RWPE1 (cell line): ENCODE measurements at regions of chr10 and their contacts with region 1.

Region 1: GRCh38 chr10:58531084-58531695 is 18.5 kb downstream of the BICC1 start:
- DNase-seq: peak; percentile 29
- H3K27ac ChIP-seq: no peak overlapping the region
- CTCF ChIP-seq: peak; percentile 84

Region 2: DNA sequence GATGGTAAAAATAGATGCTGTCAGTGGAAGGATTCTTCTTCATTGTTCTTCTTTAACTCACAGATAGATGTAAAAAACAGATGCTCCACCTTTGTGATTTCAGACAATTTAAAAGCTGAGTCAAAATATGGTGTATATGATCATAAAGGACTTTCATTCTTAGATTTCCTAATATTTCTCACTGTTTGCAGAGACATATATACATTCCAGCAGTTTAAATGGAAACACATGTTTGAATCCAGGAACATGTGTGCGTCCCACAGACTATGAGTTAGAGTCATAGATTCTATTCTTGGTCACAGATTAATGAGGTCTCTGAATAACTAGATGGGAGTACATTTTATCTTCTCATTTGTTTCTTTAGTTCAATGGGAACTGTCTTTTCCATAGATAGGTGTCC is 91.1 kb after region 1 on chr10:
- CTCF ChIA-PET with region 1: interaction called, 10 read pairs
- POLR2A ChIA-PET with region 1: no interaction called
- DNase-seq: no peak
- H3K27ac ChIP-seq: no peak overlapping the region
- CTCF ChIP-seq: no peak